IMR-90 (cell line): ENCODE measurements at regions of chr9 and their contacts with region 1.

Region 1: GRCh38 chr9:132768932-132769905 is 99.0 kb downstream of the GTF3C4 start:
- DNase-seq: peak; percentile 25
- ATAC-seq: peak; percentile 76
- H3K4me3 ChIP-seq: peak overlapping the region; percentile 83
- H3K27ac ChIP-seq: peak overlapping the region; percentile 77; the same call in 1 of the 2 replicates
- H3K4me1 ChIP-seq: peaks cover 6% of the 10 kb centered on the region; the same call in 1 of the 2 replicates
- H3K27me3 ChIP-seq: peaks cover 3% of the 10 kb centered on the region
- CTCF ChIP-seq: peak; percentile 31
- POLR2A ChIP-seq: no peak
- RAD21 ChIP-seq: no peak

Region 2: DNA sequence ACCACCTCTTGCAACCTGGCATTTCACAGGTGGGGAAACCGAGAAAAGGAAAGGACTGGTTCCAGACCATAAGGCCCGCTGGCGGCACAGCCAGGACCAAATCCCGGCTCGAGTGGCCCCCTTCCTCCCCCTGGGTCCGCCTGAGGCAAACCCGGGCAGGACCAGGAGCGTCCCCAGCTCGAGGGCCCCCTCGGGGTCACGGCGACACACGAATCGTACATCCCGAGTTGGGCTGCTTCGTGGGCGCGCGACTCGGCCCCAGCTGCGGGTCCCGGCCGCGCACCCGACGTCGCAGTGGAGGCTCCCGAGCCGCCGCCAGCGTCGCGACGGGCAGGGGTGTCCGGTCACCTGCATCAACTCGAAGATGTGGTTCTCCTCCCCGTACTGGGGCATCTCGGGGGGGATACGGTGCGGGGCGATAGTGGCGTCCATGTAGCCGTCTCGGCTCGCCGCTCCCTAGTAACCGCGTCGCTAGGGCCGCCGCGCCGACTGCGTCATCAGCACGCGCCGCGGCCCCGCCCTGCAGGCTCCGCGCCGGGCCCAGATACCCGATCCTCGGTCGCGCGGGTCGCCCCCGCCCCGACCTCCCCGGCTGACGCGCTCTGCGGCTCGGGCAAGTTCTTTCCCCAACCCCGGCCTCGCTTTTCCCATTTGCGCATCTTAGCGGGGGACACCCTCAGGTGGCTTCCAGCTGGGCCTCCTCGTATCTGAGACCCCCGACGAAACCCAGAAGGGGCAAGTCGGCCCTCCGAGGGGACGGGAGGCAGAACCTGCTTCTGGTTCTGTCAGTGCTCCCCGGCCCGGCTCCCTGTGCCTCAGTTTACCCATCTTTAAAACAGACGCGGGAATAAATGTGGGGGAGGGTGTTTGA is 108.8 kb after region 1 on chr9 and contains the start of gene AK8:
- CTCF ChIA-PET with region 1: no interaction called
- POLR2A ChIA-PET with region 1: no interaction called
- dilution Hi-C with region 1: no loop called
- in situ Hi-C with region 1: no loop called
- intact Hi-C with region 1: loop called (anchors 1 kb)
- DNase-seq: peak; percentile 66
- ATAC-seq: peak; percentile 95
- H3K4me3 ChIP-seq: peak within 1 kb of the TSS; percentile 97
- H3K27ac ChIP-seq: peak within 1 kb of the TSS; percentile 81
- H3K4me1 ChIP-seq: no peaks in the 10 kb centered on the region
- H3K27me3 ChIP-seq: peaks cover 5% of the 10 kb centered on the region; the same call in 1 of the 2 replicates
- CTCF ChIP-seq: no peak
- POLR2A ChIP-seq: peak; percentile 69
- RAD21 ChIP-seq: no peak
- total RNA-seq, gene AK8: under 0.01 TPM in 2 replicates